HEK293T (cell line): ENCODE measurements at regions of chr11 and their contacts with region 1.

Region 1: GRCh38 chr11:64864473-64865285 is 13.7 kb downstream of the EHD1 start:
- DNase-seq: no peak

Region 2: GRCh38 chr11:64878494-64879243 is 14.0 kb after region 1 on chr11 and contains the start of gene EHD1:
- CTCF ChIA-PET with region 1: interaction called, 4 read pairs
- POLR2A ChIA-PET with region 1: interaction called, 26 read pairs
- DNase-seq: peak; percentile 100

Region 3: DNA sequence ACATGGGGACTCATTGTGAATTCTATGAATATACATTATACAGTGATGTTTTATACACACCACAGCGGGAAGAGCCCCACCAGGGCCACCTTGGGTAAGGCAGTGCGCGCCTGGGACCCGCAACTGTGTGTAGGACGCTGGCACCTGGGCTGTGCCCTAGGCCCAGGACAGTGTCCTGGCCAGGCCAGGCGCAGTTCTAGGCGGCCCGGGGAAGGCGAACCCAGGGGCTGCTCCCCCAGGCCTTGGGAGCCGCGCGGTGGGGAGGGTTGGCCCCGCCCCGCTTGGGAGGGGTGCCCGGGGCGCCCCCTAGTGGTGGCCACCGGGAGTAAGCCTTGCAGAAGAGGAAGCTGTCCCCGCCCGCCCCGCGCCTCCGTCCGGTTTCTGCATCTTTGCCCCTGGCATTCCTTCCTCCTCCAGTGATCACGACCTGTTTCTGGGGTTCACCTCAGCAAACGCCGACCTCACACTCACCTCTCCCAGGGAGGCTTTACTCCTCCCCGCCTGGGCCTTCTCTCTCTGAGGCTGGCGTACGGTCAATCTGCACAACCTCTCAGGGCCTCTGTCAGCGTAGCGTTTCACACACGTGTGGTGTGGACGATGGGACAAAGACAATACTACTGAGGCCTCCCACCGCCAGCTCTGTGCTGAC is 23.2 kb after region 1 on chr11:
- CTCF ChIA-PET with region 1: interaction called, 10 read pairs
- POLR2A ChIA-PET with region 1: interaction called, 3 read pairs
- DNase-seq: peak; percentile 90

Region 4: DNA sequence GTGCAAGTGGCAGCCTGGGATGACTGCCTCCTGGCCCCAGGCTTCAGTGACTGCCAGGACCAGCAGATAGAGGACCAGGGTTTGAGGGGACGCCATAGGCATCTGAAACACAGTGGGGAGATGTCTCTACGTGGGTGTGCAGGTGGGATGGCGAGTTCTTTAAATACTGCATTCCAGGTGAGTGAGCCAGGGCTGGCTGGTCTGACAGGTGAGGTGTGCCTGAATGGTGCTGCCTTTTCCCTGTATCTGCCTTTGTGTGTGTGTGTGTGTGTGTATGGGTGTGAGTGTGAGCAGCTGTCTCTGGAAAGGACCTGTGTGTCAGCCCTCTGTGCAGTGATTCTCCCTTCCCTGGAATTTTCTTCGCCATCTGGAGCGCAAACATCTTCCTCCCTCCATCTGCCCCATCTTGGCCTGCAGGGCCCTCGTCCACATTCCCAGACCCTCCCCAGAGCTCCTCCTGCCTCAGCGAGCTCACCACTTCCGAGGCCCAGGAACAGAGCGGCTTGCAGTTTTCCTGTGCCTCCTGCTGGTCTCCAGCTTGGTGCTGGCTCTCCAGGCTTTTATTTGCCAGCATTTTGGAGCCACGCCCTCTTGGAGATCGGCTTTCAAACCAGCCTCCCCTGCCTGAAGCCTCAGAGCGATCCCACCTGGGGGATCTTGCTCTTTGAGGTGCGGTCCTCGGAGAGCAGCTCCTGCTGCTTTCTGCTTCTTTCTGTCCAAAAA is 70.8 kb after region 1 on chr11 and contains the start of gene GPHA2:
- CTCF ChIA-PET with region 1: no interaction called
- POLR2A ChIA-PET with region 1: no interaction called
- DNase-seq: peak; percentile 56